ENCODE measurements at regions of chr16 and their contacts with region 1.

Region 1: DNA sequence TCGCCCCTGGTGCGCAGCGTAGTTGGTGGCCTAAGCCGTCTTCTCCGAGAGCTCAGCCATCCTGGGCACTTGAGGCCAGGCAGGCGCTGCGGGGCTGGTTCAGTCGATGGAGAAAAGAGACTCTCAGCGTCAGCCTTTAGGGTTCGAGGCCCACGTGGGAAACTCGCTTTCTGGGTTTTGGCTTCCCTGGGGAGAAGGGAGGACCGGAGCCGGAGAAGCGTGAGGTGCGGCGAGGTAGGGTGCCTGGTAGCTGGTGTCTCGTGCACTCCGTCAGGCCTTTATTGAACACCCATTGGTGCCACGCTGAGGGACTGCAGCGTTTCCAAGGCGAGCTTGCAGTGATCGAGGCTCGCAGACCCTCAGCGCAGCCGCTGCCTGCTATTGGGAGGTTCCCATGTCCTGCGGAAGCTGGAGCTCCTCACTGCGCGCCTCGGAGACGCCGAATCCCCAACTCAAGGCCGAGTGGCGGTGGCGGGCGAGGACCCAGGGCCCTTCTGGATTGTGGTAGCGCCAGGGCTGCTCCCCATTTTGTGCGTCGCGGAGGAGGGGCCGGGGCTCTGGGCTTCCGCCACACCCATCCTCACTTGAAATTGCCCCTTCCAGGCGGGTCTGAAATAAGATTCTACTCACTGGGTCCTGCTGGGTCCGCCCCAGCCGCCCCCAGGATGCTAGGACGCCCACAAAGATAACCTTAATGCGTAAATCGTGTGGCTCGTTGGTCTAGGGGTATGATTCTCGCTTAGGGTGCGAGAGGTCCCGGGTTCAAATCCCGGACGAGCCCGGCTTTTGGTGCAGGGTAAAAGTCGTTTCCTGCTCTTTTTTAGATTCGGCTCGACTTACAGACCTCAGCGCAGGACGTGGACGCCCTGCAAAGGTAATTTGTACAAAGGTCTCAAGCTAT is 1.2 kb downstream of the OR1F1 start:
- DNase-seq: no peak
- ATAC-seq: peak; percentile 21
- H3K4me3 Mint-ChIP-seq: peak overlapping the region; percentile 32
- H3K27ac Mint-ChIP-seq: peak overlapping the region; percentile 53
- H3K4me1 Mint-ChIP-seq: peaks cover 25% of the 10 kb centered on the region
- H3K27me3 Mint-ChIP-seq: peaks cover 71% of the 10 kb centered on the region
- CTCF ChIP-seq: no peak

Region 2: GRCh38 chr16:3173892-3174617 is 15.1 kb before region 1 on chr16:
- CTCF ChIA-PET with region 1: no interaction called
- POLR2A ChIA-PET with region 1: no interaction called
- intact Hi-C with region 1: loop called (anchors 2 kb)
- DNase-seq: no peak
- ATAC-seq: peak; percentile 10
- H3K4me3 Mint-ChIP-seq: peak overlapping the region; percentile 24
- H3K27ac Mint-ChIP-seq: peak overlapping the region; percentile 12
- H3K4me1 Mint-ChIP-seq: peaks cover 31% of the 10 kb centered on the region
- H3K27me3 Mint-ChIP-seq: peaks cover 56% of the 10 kb centered on the region
- CTCF ChIP-seq: no peak

Region 3: GRCh38 chr16:3611146-3611975 is 422.2 kb after region 1 on chr16 and contains the start of gene SLX4:
- CTCF ChIA-PET with region 1: no interaction called
- POLR2A ChIA-PET with region 1: no interaction called
- intact Hi-C with region 1: no loop called
- DNase-seq: peak; percentile 95
- ATAC-seq: peak; percentile 85
- H3K4me3 Mint-ChIP-seq: peak within 1 kb of the TSS; percentile 100
- H3K27ac Mint-ChIP-seq: peak within 1 kb of the TSS; percentile 96
- H3K4me1 Mint-ChIP-seq: peaks cover 60% of the 10 kb centered on the region
- H3K27me3 Mint-ChIP-seq: no peaks in the 10 kb centered on the region
- CTCF ChIP-seq: no peak
- total RNA-seq, gene SLX4: 11.4 and 13.0 TPM in 2 replicates

Measured in activated B cell treated with CpG ODN at 0.5 μM for 24 hours (primary cell).